Activated CD8-positive, alpha-beta T cell treated with anti-CD3 and anti-CD28 coated beads, Interleukin-2, amount 10 ng/mL, durations not matched to agents 7 days and 5 days (primary cell): ENCODE measurements at regions of chr7 and their contacts with region 1.

Region 1: GRCh38 chr7:142587578-142588191 is 161.6 kb upstream of the PRSS1 start:
- DNase-seq: peak; percentile 43
- ATAC-seq: peak; percentile 89
- H3K4me3 Mint-ChIP-seq: peak overlapping the region; percentile 17
- H3K27ac Mint-ChIP-seq: no peak overlapping the region
- H3K4me1 Mint-ChIP-seq: no peaks in the 10 kb centered on the region
- H3K27me3 Mint-ChIP-seq: no peaks in the 10 kb centered on the region

Region 2: DNA sequence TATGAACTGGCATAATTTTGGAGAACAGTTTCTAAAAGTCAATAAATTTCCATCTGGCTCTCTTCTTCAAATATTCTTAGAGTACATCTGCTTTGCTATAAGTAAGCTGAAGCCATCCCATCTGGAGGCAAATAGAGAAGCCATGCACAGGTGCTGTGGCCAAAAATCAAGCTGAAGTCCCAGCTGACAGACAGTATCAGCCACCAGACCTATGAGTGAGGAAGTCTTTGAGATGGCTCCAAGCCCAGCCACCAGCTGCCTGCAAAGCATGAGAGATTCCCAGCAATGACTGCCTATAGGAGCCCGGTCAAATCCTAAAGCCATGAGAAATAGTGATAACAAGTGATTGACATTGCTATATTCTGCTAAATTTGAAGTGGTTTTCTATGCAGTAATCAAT is 308.1 kb before region 1 on chr7:
- CTCF ChIA-PET with region 1: no interaction called
- POLR2A ChIA-PET with region 1: no interaction called
- DNase-seq: no peak
- ATAC-seq: no peak
- H3K4me3 Mint-ChIP-seq: no peak overlapping the region
- H3K27ac Mint-ChIP-seq: no peak overlapping the region
- H3K4me1 Mint-ChIP-seq: peaks cover 2% of the 10 kb centered on the region
- H3K27me3 Mint-ChIP-seq: peaks cover 37% of the 10 kb centered on the region

Region 3: DNA sequence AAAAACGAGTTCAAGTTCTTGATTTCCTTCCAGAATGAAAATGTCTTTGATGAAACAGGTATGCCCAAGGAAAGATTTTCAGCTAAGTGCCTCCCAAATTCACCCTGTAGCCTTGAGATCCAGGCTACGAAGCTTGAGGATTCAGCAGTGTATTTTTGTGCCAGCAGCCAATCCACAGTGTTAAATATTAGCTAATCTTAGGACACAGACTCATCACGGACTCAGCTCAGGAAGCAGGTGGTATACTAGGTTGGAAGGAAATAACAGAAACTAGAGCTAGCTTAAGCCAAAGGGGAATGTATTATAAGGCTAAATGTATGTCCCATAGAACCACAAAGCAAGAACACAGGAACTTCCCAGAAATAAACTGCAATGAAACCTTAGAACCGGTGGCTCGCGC is 10.6 kb after region 1 on chr7:
- CTCF ChIA-PET with region 1: interaction called, 13 read pairs
- POLR2A ChIA-PET with region 1: no interaction called
- DNase-seq: no peak
- ATAC-seq: no peak
- H3K4me3 Mint-ChIP-seq: no peak overlapping the region
- H3K27ac Mint-ChIP-seq: no peak overlapping the region
- H3K4me1 Mint-ChIP-seq: no peaks in the 10 kb centered on the region
- H3K27me3 Mint-ChIP-seq: peaks cover 14% of the 10 kb centered on the region

Region 4: GRCh38 chr7:142603870-142604448 is 16.3 kb after region 1 on chr7:
- CTCF ChIA-PET with region 1: interaction called, 13 read pairs
- POLR2A ChIA-PET with region 1: no interaction called
- DNase-seq: peak; percentile 66
- ATAC-seq: peak; percentile 53
- H3K4me3 Mint-ChIP-seq: no peak overlapping the region
- H3K27ac Mint-ChIP-seq: no peak overlapping the region
- H3K4me1 Mint-ChIP-seq: peaks cover under 1% of the 10 kb centered on the region
- H3K27me3 Mint-ChIP-seq: peaks cover 12% of the 10 kb centered on the region

Region 5: GRCh38 chr7:142632291-142633134 is 44.8 kb after region 1 on chr7:
- CTCF ChIA-PET with region 1: no interaction called
- POLR2A ChIA-PET with region 1: no interaction called
- DNase-seq: peak; percentile 71
- ATAC-seq: peak; percentile 81
- H3K4me3 Mint-ChIP-seq: no peak overlapping the region
- H3K27ac Mint-ChIP-seq: no peak overlapping the region
- H3K4me1 Mint-ChIP-seq: peaks cover 18% of the 10 kb centered on the region
- H3K27me3 Mint-ChIP-seq: peaks cover 13% of the 10 kb centered on the region

Region 6: GRCh38 chr7:142697270-142697669 is 109.6 kb after region 1 on chr7:
- CTCF ChIA-PET with region 1: no interaction called
- POLR2A ChIA-PET with region 1: no interaction called
- DNase-seq: no peak
- ATAC-seq: no peak
- H3K4me3 Mint-ChIP-seq: no peak overlapping the region
- H3K27ac Mint-ChIP-seq: no peak overlapping the region
- H3K4me1 Mint-ChIP-seq: peaks cover 65% of the 10 kb centered on the region
- H3K27me3 Mint-ChIP-seq: peaks cover 2% of the 10 kb centered on the region

Region 7: GRCh38 chr7:142880876-142881505 is 293.3 kb after region 1 on chr7:
- CTCF ChIA-PET with region 1: no interaction called
- POLR2A ChIA-PET with region 1: no interaction called
- DNase-seq: peak; percentile 66
- ATAC-seq: peak; percentile 78
- H3K4me3 Mint-ChIP-seq: no peak overlapping the region
- H3K27ac Mint-ChIP-seq: no peak overlapping the region
- H3K4me1 Mint-ChIP-seq: no peaks in the 10 kb centered on the region
- H3K27me3 Mint-ChIP-seq: peaks cover 12% of the 10 kb centered on the region